ENCODE measurements at regions of chr10 and their contacts with region 1.

Region 1: GRCh38 chr10:77641788-77642397 is 4.3 kb upstream of the KCNMA1 start:
- DNase-seq: peak; percentile 84
- ATAC-seq: 0 out of 2 replicates have a peak, but pooled peaks have one; percentile 20
- H3K4me3 ChIP-seq: no peak overlapping the region
- H3K27ac ChIP-seq: peak overlapping the region; percentile 13; the same call in 1 of the 2 replicates
- H3K4me1 ChIP-seq: peaks cover 13% of the 10 kb centered on the region
- H3K27me3 ChIP-seq: no peaks in the 10 kb centered on the region
- CTCF ChIP-seq: peak; percentile 89

Region 2: DNA sequence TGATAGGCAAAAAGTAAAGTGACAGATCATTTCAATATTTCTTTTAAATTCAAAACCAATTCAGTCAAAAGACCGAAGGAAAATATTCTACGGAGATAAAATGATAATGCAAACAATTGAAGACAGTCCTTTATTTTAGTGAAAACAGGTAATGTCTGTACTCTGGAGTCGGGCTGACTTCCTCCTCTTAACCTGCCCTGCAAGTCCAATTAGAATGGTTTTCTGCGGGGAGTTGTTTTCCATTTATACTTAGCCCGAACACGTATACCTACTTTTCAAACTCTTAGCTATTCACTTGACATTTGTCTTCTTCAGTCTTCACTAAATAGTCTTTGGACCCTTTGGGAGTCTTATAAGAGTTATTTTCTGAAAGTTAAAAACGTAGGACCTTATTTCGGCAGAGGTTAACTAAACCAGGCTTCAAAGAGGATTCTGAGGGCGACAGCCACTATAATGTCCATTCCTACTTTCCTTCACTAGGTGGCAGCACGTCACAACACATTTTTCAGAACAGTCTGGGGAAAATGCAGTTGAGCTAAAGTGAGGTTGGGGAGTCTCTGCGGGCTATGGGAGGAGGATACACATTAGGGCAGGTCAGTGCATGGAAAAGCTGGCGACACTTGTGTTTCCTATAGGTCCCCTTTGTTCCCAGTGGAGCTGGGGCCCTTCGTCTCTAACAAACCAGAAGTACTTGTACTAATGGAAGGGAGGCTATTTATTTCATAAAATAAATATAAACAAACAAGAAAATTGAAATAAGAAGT is 476.3 kb before region 1 on chr10:
- CTCF ChIA-PET with region 1: interaction called, 10 read pairs
- POLR2A ChIA-PET with region 1: no interaction called
- in situ Hi-C with region 1: no loop called
- intact Hi-C with region 1: loop called (anchors 2 kb)
- DNase-seq: peak; percentile 88
- ATAC-seq: peak; percentile 78
- H3K4me3 ChIP-seq: no peak overlapping the region
- H3K27ac ChIP-seq: peak overlapping the region; percentile 0; the same call in 1 of the 2 replicates
- H3K4me1 ChIP-seq: peaks cover 28% of the 10 kb centered on the region
- H3K27me3 ChIP-seq: no peaks in the 10 kb centered on the region
- CTCF ChIP-seq: no peak; the same call in 1 of the 2 replicates

Region 3: DNA sequence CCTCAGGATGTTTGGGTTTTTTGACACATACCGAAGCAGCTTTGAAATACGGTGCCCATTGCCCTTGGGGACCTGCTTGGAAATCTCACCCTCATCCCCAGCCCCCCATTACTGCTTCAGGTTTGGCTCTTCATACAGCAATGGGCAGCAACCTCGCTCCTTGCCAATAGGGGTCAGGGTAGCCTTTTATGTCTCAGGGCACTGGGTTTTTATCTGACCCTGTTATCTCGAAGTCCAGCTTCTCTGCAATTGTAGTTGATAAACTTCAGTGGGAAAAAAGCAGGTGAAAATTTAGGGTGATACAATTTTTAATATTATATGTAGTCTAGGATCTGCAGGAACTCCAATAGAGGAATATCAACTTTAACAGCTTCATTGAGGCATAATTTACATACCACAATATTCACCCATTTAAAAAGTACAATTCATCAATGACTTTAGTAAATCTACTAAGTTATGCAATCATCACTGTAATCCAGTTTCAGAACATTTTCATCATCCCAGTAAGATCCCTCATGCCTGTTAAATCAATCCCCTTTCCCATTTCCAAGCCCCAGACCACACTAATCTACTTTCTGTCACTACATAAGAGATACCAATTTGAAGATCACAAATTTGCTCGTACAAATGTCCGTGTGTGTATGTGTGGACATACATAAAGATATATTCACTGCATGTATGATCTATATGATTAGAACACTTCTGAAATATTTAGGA is 390.4 kb before region 1 on chr10:
- CTCF ChIA-PET with region 1: no interaction called
- POLR2A ChIA-PET with region 1: no interaction called
- in situ Hi-C with region 1: no loop called
- intact Hi-C with region 1: loop called (anchors 5 kb)
- DNase-seq: no peak
- ATAC-seq: peak; percentile 75; the same call in 1 of the 2 replicates
- H3K4me3 ChIP-seq: no peak overlapping the region
- H3K27ac ChIP-seq: peak overlapping the region; percentile 3; the same call in 1 of the 2 replicates
- H3K4me1 ChIP-seq: no peaks in the 10 kb centered on the region
- H3K27me3 ChIP-seq: no peaks in the 10 kb centered on the region
- CTCF ChIP-seq: peak; percentile 82

Region 4: GRCh38 chr10:77501152-77501845 is 140.6 kb before region 1 on chr10:
- CTCF ChIA-PET with region 1: interaction called, 12 read pairs
- POLR2A ChIA-PET with region 1: no interaction called
- in situ Hi-C with region 1: no loop called
- intact Hi-C with region 1: loop called (anchors 5 kb)
- DNase-seq: peak; percentile 86
- ATAC-seq: peak; percentile 77
- H3K4me3 ChIP-seq: no peak overlapping the region
- H3K27ac ChIP-seq: peak overlapping the region; percentile 88
- H3K4me1 ChIP-seq: peaks cover 77% of the 10 kb centered on the region
- H3K27me3 ChIP-seq: no peaks in the 10 kb centered on the region
- CTCF ChIP-seq: no peak

Region 5: DNA sequence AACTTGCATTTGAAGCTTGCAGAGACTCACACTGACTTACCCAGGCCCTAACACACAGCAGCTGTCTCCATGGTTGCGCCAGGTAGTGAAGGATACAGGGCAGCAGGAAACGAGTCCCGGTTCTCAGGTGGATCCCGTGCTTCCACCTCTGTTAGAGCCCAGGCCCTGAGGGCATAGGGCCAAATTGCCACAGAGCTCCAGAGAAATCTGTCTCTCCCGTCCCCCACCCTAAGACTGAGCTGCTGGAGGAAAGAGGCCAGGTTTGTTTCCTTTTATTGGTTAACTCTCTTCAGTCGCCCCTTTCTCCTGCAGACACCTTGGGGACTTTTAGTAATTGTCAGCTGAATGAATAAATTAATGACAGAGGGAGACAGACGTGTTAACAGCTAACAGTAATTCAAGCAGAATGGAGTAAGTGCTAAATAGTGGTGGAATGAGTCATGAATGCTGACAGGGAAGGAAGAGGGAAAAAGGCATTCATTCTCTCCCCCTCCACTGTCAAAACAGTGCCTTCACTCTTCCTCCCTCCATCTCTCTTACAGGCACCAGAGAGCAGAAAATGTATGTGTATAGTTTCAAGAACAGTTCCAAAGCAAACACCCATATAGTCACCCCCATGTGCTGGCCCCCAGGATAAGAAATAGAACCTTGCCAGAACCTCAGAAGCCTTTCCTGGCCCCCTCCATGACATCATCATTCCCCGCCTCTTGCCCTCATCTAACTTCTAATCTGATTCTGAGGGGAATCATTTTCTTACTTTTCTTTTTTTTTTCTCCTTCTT is 301.4 kb after region 1 on chr10:
- CTCF ChIA-PET with region 1: interaction called, 10 read pairs
- POLR2A ChIA-PET with region 1: no interaction called
- in situ Hi-C with region 1: no loop called
- intact Hi-C with region 1: no loop called
- DNase-seq: peak; percentile 77
- ATAC-seq: peak; percentile 79
- H3K4me3 ChIP-seq: peak overlapping the region in 1 of 2 experiments; percentile 22; a peak in 2 of 4 replicates
- H3K27ac ChIP-seq: peak overlapping the region; percentile 77
- H3K4me1 ChIP-seq: peaks cover 37% of the 10 kb centered on the region
- H3K27me3 ChIP-seq: no peaks in the 10 kb centered on the region
- CTCF ChIP-seq: no peak